ENCODE measurements at regions of chr3 and their contacts with region 1.

Region 1: GRCh38 chr3:128787256-128788240 is 61.6 kb downstream of the RAB7A start:
- DNase-seq: peak; percentile 70
- ATAC-seq: peak; percentile 90
- H3K4me3 ChIP-seq: no peak overlapping the region
- H3K27ac ChIP-seq: peak overlapping the region; percentile 80
- H3K4me1 ChIP-seq: peaks cover 20% of the 10 kb centered on the region
- H3K27me3 ChIP-seq: no peaks in the 10 kb centered on the region
- CTCF ChIP-seq: peak; percentile 45

Region 2: DNA sequence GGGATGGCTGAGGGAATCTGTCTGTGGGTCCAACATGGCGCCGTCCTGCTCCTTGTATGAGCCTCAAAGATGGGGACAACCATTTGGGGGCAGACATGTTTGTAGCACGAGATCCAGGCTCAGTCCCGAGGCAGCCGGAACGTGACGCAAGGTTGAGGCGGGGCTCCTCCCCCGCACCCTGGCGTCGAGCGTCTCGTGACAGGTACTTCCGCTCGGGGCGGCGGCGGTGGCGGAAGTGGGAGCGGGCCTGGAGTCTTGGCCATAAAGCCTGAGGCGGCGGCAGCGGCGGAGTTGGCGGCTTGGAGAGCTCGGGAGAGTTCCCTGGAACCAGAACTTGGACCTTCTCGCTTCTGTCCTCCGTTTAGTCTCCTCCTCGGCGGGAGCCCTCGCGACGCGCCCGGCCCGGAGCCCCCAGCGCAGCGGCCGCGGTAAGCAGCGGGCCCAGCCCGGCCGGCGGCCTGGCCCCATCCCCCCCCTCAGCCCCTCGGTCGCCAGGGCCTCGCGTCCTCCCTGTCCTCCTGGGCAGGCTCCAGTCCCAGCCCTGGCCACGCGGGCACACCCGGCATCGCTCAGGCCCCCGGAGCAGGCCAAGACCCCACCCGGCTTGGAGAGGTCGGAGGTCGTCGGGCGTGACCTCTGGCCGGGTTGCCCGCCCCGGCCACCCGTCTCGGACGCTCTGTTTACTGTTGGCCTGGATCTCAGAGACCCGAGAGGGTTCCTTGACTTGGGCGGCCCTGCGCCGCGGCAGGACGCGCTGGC is 61.4 kb before region 1 on chr3 and contains the start of gene RAB7A:
- CTCF ChIA-PET with region 1: no interaction called
- POLR2A ChIA-PET with region 1: no interaction called
- intact Hi-C with region 1: loop called (anchors 5 kb)
- DNase-seq: peak; percentile 94
- ATAC-seq: peak; percentile 92
- H3K4me3 ChIP-seq: peak within 1 kb of the TSS; percentile 99
- H3K27ac ChIP-seq: peak within 1 kb of the TSS; percentile 76
- H3K4me1 ChIP-seq: peaks cover 20% of the 10 kb centered on the region
- H3K27me3 ChIP-seq: no peaks in the 10 kb centered on the region
- CTCF ChIP-seq: no peak
- total RNA-seq, gene RAB7A: 48.0 and 78.2 TPM in 2 replicates

Region 3: DNA sequence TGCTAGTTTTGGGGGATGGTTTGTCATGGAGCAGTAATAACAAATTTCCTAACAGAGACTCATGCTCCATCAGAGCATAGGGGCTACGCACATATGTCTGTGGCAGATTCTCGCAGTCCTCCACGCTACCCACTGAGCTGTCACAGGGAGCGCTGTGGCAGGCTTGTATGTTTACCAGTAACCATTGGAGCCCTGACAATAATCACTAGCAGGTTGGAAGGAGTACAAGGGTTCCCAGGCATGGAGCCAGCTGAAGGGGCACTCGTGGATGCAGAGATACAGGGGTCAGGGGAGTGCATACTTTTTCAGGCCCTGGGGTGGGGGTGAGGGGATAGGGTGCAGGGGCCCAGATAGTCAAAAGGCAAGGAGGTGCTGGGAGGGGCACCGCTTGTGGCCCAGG is 265.1 kb after region 1 on chr3:
- CTCF ChIA-PET with region 1: no interaction called
- POLR2A ChIA-PET with region 1: no interaction called
- intact Hi-C with region 1: no loop called
- DNase-seq: no peak
- ATAC-seq: no peak
- H3K4me3 ChIP-seq: no peak overlapping the region
- H3K27ac ChIP-seq: no peak overlapping the region
- H3K4me1 ChIP-seq: no peaks in the 10 kb centered on the region
- H3K27me3 ChIP-seq: no peaks in the 10 kb centered on the region
- CTCF ChIP-seq: no peak